ENCODE measurements at regions of chr2 and their contacts with region 1.

Region 1: GRCh38 chr2:230793572-230794359 is 71.0 kb upstream of the ITM2C start:
- DNase-seq: peak; percentile 31 to 91 (median 53)
- ATAC-seq: peak; percentile 92
- H3K4me3 ChIP-seq: no peak overlapping the region
- H3K4me3 Mint-ChIP-seq: peak overlapping the region; percentile 46
- H3K27ac ChIP-seq: peak overlapping the region; percentile 34 to 52
- H3K27ac Mint-ChIP-seq: no peak overlapping the region
- H3K4me1 ChIP-seq: peaks cover 47% of the 10 kb centered on the region
- H3K4me1 Mint-ChIP-seq: peaks cover 47% of the 10 kb centered on the region
- H3K27me3 ChIP-seq: no peaks in the 10 kb centered on the region
- H3K27me3 Mint-ChIP-seq: no peaks in the 10 kb centered on the region
- CTCF ChIP-seq: no peak

Region 2: GRCh38 chr2:229627728-229628127 is 1166.0 kb before region 1 on chr2:
- CTCF ChIA-PET with region 1: no interaction called
- POLR2A ChIA-PET with region 1: no interaction called
- intact Hi-C with region 1: no loop called
- DNase-seq: no peak
- ATAC-seq: no peak
- H3K4me3 ChIP-seq: no peak overlapping the region
- H3K4me3 Mint-ChIP-seq: no peak overlapping the region
- H3K27ac ChIP-seq: no peak overlapping the region
- H3K27ac Mint-ChIP-seq: no peak overlapping the region
- H3K4me1 ChIP-seq: no peaks in the 10 kb centered on the region
- H3K4me1 Mint-ChIP-seq: no peaks in the 10 kb centered on the region
- H3K27me3 ChIP-seq: peaks cover 3 to 11% of the 10 kb centered on the region in 2 experiments
- H3K27me3 Mint-ChIP-seq: peaks cover 18% of the 10 kb centered on the region
- CTCF ChIP-seq: no peak

Region 3: GRCh38 chr2:230781130-230781797 is 12.5 kb before region 1 on chr2:
- CTCF ChIA-PET with region 1: interaction called, 13 read pairs
- POLR2A ChIA-PET with region 1: interaction called, 16 read pairs
- intact Hi-C with region 1: loop called in 1 of 2 experiments (anchors 2 kb)
- DNase-seq: peak in 13 of 14 experiments; percentile 14 to 90 (median 38)
- ATAC-seq: peak; percentile 97
- H3K4me3 ChIP-seq: no peak overlapping the region
- H3K4me3 Mint-ChIP-seq: peak overlapping the region; percentile 16
- H3K27ac ChIP-seq: no peak overlapping the region
- H3K27ac Mint-ChIP-seq: peak overlapping the region; percentile 80
- H3K4me1 ChIP-seq: peaks cover 41% of the 10 kb centered on the region
- H3K4me1 Mint-ChIP-seq: peaks cover 79% of the 10 kb centered on the region
- H3K27me3 ChIP-seq: no peaks in the 10 kb centered on the region
- H3K27me3 Mint-ChIP-seq: no peaks in the 10 kb centered on the region
- CTCF ChIP-seq: no peak

Region 4: DNA sequence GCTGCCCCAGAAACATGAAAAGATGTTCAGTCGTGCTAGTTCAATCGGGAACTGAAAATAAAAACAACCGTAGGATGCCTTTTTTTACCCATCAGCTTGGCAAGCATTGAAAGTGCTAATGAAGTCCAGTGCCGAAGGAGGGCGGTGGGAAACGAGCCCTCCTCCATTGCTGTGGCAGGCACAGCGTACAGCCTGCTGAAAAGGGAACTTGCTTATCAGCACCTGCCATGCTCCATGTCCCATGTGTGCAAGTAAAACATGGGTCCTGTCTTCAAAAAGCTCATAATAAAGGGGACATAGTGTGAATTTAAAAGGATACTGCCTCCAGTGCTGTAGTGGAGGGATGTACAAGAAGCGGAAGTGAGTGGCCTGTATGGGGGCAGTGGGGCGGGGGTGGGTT is 487.1 kb after region 1 on chr2:
- CTCF ChIA-PET with region 1: no interaction called
- POLR2A ChIA-PET with region 1: no interaction called
- intact Hi-C with region 1: no loop called
- DNase-seq: no peak
- ATAC-seq: no peak
- H3K4me3 ChIP-seq: no peak overlapping the region
- H3K4me3 Mint-ChIP-seq: no peak overlapping the region
- H3K27ac ChIP-seq: no peak overlapping the region
- H3K27ac Mint-ChIP-seq: no peak overlapping the region
- H3K4me1 ChIP-seq: no peaks in the 10 kb centered on the region
- H3K4me1 Mint-ChIP-seq: no peaks in the 10 kb centered on the region
- H3K27me3 ChIP-seq: peaks cover 0 to 2% of the 10 kb centered on the region in 2 experiments
- H3K27me3 Mint-ChIP-seq: peaks cover 8% of the 10 kb centered on the region
- CTCF ChIP-seq: no peak

Measured in CD4-positive, alpha-beta T cell (primary cell).